GM12878 (cell line): ENCODE measurements at regions of chrX and their contacts with region 1.

Region 1: DNA sequence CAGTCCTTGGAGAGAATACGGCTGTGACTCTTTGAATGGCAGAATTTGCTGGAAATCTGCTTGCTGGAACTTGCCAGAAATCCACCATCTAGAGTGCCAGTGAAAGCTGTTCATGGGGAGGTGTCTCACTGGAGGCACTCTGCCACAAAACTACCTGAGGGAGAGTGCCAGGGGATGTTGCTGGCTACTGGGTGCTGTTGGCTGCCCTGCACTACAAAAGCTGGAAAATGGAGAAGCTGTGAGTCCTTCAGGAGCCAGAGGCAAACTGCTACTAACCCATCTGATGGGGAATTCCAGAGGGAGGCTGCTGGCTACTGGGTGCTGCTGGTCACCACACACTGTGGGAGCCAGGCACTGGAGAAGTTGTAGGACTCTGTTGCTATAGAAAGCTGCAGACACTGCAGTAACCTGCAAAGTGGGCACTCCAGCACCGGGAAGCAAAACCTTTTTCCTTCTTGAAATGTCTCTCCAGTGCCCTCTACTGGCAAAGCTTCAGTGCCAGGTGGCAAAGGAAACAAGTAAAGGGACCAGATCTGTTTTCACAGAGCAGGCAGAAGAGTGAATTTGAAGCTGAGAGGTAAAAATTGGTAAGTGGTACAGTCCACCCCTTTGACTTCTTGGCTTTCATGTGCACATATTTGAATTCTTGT is 47.8 kb upstream of the HSD17B10 start:
- DNase-seq: no peak
- ATAC-seq: peak; percentile 89
- H3K4me3 ChIP-seq: no peak overlapping the region
- H3K27ac ChIP-seq: no peak overlapping the region
- H3K4me1 ChIP-seq: no peaks in the 10 kb centered on the region
- H3K27me3 ChIP-seq: no peaks in the 10 kb centered on the region
- CTCF ChIP-seq: peak; percentile 66 to 82 (median 78)
- EP300 ChIP-seq: no peak
- POLR2A ChIP-seq: no peak
- RAD21 ChIP-seq: peak; percentile 59

Region 2: GRCh38 chrX:53445977-53446376 is 36.0 kb before region 1 on chrX:
- CTCF ChIA-PET with region 1: interaction called, 11 read pairs
- POLR2A ChIA-PET with region 1: no interaction called
- RAD21 ChIA-PET with region 1: interaction called, 3 read pairs
- SMC1A ChIA-PET with region 1: interaction called, 4 read pairs
- in situ Hi-C with region 1: no loop called
- intact Hi-C with region 1: no loop called
- DNase-seq: no peak
- ATAC-seq: peak; percentile 73
- H3K4me3 ChIP-seq: no peak overlapping the region
- H3K27ac ChIP-seq: no peak overlapping the region
- H3K4me1 ChIP-seq: peaks cover 4% of the 10 kb centered on the region; the same call in 1 of the 2 replicates
- H3K27me3 ChIP-seq: no peaks in the 10 kb centered on the region
- CTCF ChIP-seq: peak; percentile 67 to 77 (median 72)
- EP300 ChIP-seq: no peak
- POLR2A ChIP-seq: no peak
- RAD21 ChIP-seq: peak; percentile 63

Region 3: DNA sequence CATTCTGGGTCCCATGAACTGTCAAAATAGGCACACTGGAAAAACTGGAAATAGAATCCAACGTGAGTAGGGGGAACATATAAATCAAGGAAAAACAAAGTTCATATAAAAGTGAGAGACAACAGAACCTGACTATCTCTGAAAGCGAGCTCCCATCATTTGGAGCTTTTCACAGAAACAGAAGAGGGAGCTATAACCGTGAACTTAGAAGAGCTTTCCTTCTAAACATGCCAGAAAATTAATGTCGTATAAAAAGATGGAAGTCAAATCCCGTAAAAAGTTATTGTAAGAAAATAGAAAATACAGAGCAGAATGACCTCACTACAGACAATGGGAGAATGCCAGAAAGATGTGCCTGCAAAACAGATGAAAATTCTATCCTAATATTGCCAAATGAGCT is 23.9 kb before region 1 on chrX:
- CTCF ChIA-PET with region 1: interaction called, 15 read pairs
- POLR2A ChIA-PET with region 1: no interaction called
- RAD21 ChIA-PET with region 1: interaction called, 3 read pairs
- SMC1A ChIA-PET with region 1: interaction called, 3 read pairs
- in situ Hi-C with region 1: no loop called
- intact Hi-C with region 1: no loop called
- DNase-seq: no peak
- ATAC-seq: no peak
- H3K4me3 ChIP-seq: no peak overlapping the region
- H3K27ac ChIP-seq: no peak overlapping the region
- H3K4me1 ChIP-seq: no peaks in the 10 kb centered on the region
- H3K27me3 ChIP-seq: no peaks in the 10 kb centered on the region
- CTCF ChIP-seq: 0 out of 6 replicates have a peak, but pooled peaks of 1 of the 3 experiments have one; percentile 4
- EP300 ChIP-seq: no peak
- POLR2A ChIP-seq: no peak
- RAD21 ChIP-seq: no peak

Region 4: DNA sequence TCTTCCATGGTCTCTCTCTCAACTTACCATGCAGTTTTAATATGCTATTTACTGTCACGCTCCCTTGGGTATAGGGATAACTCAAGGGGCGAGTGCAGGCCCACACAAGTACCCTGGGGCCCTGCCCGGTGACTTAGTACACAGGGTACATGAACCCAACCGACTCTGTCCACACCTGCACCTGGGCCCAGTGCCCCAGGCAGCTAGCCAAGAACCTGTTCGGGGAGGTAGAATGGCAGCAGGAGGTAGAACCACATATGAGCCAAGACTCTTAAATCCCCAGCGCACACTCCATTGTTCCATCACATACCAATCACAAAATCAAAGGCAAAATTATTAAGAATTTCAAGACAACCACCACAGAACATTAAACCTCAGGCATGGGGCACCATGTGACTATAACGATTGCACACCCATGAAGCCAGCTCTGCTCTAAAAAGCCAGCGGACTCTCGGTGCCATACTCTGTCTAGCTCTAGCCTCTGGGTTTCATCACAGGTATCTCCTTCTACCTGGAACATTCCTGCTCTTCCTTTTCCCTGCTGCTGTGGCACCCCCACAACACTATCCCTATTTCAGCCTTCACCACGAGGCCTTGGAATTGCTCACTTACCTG is 547.7 kb after region 1 on chrX:
- CTCF ChIA-PET with region 1: no interaction called
- POLR2A ChIA-PET with region 1: no interaction called
- RAD21 ChIA-PET with region 1: no interaction called
- SMC1A ChIA-PET with region 1: no interaction called
- in situ Hi-C with region 1: no loop called
- intact Hi-C with region 1: no loop called
- DNase-seq: no peak
- ATAC-seq: no peak
- H3K4me3 ChIP-seq: no peak overlapping the region
- H3K27ac ChIP-seq: no peak overlapping the region
- H3K4me1 ChIP-seq: no peaks in the 10 kb centered on the region
- H3K27me3 ChIP-seq: no peaks in the 10 kb centered on the region
- CTCF ChIP-seq: no peak
- EP300 ChIP-seq: no peak
- POLR2A ChIP-seq: no peak
- RAD21 ChIP-seq: no peak